Calu3 (cell line): ENCODE measurements at regions of chr3 and their contacts with region 1.

Region 1: DNA sequence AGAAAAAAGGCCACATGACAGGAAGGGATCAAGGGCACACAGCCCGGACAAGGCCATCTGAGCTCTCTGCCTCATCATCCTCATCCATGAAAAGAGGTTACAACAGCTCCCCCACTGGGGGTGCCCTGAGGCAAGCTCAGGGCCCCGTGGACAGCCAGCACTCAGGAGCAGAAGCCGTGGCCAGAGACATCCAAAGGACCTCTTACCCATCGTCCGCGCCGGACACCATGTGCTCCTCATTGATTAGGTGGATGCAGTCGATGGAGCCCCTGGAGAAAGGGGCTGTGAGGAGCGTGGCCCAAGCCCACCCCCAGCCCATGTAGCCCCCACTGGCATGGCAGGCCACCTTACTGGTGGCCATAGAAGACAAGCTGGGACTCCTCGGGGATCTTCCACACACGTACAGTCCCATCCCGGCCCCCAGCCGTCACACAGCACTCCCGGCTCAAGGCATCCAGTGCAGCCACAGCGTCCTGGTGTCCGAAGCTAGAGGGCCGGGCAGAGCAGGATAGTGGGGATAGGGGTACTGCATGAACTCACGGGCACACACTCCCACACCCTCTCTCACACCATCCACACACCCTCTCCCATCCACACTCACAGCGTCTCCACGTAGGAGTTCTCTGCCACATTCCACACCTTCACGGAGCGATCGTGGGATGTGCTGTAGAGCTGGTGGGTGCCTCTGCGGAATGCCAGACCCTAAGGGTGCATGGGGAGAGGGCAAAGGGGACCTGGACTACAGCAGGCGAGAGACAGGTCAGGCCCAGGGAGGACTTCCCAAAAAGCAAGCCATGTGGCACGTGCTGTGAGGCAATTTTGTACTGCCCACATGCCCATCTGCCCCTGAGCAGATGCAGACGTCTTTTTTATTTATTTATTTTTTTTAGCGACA is 6.5 kb downstream of the RRP9 start:
- DNase-seq: no peak
- H3K4me3 Mint-ChIP-seq: no peak overlapping the region
- H3K27ac Mint-ChIP-seq: no peak overlapping the region
- H3K4me1 Mint-ChIP-seq: no peaks in the 10 kb centered on the region
- H3K27me3 Mint-ChIP-seq: no peaks in the 10 kb centered on the region
- CTCF ChIP-seq: no peak

Region 2: DNA sequence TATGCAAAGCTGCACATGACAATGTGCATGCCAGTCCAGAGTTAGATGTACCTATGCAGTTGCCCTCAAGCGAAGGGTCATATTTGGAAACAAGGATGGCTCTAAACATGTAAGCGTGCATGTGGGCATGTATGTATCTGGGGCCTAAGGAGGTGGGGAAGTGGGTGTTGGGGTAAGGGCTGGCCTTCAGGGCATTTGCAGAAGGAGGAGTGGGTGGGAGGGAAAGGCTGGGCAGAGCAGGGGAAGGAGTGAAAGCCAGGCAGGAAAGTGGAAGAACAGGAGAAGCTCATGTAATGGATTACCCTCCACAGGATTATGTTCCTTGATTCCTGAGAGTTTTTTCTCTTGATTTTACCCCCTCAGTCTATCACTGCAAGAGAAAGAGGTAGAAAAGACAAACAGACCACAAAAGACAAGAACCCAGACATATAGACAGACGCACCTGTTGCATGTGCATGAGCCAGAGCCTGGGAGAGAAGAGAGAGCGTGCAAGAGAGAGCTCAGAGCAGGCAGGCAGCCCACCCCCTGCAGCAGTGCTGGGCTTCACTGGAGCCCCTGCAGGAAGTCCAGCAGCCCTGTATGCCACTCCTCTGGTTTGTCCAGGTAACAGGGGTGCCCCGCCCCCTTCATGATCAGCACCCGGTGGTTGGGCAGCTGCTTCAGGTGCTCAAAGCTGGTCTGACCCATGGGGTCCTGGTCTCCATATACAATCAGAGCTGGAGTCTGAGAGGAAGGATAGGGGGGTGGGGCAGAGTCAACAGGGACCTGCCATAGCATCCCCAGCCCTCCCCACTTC is 33.8 kb after region 1 on chr3:
- CTCF ChIA-PET with region 1: interaction called, 10 read pairs
- intact Hi-C with region 1: no loop called
- DNase-seq: no peak
- H3K4me3 Mint-ChIP-seq: no peak overlapping the region
- H3K27ac Mint-ChIP-seq: no peak overlapping the region
- H3K4me1 Mint-ChIP-seq: peaks cover 26% of the 10 kb centered on the region
- H3K27me3 Mint-ChIP-seq: peaks cover 13% of the 10 kb centered on the region
- CTCF ChIP-seq: no peak

Region 3: DNA sequence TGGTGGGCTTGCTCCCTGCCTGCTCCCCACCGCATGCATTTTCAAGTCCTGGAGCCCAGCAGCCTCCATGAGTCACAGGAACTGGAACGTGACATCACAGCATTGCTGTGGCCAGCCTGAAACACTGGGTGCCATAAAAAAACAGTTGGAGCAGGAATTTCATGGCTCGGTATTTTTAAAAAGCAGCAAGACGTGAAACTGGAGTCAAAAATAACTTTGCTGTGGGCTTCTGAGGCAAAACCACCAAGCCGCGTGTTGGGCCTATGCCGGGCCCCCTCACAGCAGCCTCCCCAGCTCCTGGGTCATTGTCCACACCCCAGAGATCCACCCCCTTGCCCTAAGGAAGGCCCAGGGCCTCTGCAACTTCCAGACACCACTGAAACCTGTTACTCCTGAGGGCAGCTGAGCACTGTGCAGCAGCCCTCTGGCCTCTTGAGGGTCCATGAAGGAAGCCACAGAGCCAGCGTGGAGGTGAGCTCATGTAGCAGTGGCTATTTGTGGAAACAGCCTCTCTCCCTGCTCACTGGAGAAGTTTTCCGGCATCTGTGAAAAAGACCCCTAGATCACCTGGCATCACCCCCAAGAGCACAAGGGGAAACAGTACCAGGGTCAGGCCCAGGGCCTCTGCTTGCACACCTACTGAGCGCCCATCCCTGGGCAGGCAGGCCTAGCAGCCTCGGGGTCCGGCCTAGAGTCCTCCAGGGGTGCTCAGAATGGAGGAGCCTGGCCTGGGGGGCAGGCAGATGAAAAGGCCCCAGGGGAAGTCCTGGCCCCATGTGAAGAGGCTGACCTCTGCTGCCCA is 155.1 kb after region 1 on chr3:
- CTCF ChIA-PET with region 1: no interaction called
- intact Hi-C with region 1: no loop called
- DNase-seq: no peak
- H3K4me3 Mint-ChIP-seq: no peak overlapping the region
- H3K27ac Mint-ChIP-seq: no peak overlapping the region
- H3K4me1 Mint-ChIP-seq: no peaks in the 10 kb centered on the region
- H3K27me3 Mint-ChIP-seq: no peaks in the 10 kb centered on the region
- CTCF ChIP-seq: no peak